ENCODE measurements at regions of chr4 and their contacts with region 1.

Region 1: GRCh38 chr4:182085051-182085480 is 158.1 kb upstream of the TENM3 start:
- DNase-seq: no peak
- ATAC-seq: no peak
- H3K4me3 ChIP-seq: no peak overlapping the region
- H3K27ac ChIP-seq: no peak overlapping the region
- H3K4me1 ChIP-seq: peaks cover 2% of the 10 kb centered on the region; the same call in 1 of the 2 replicates
- H3K27me3 ChIP-seq: no peaks in the 10 kb centered on the region
- CTCF ChIP-seq: no peak
- POLR2A ChIP-seq: no peak
- RAD21 ChIP-seq: no peak

Region 2: DNA sequence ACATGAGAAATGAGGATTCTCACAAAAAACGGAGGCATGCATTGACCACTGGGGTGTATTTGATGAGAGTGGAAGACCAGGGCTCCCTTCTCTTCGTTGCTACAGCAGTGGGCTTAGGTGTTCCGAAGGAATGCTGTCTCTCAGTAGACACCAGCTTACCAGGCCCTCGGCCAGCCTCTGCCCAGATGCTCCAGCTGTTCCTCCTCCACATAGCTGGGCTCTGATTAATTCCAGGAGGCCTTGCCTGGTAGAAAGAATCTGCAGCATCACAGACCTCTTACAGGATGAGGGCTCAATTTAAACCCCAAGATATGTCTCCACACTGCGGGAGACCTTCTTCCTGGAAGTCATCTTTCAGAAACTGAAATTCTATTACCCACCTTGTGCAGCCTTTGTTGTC is 188.5 kb before region 1 on chr4:
- CTCF ChIA-PET with region 1: interaction called, 13 read pairs
- POLR2A ChIA-PET with region 1: no interaction called
- dilution Hi-C with region 1: no loop called
- in situ Hi-C with region 1: no loop called
- intact Hi-C with region 1: no loop called
- DNase-seq: no peak
- ATAC-seq: no peak
- H3K4me3 ChIP-seq: no peak overlapping the region
- H3K27ac ChIP-seq: no peak overlapping the region
- H3K4me1 ChIP-seq: no peaks in the 10 kb centered on the region
- H3K27me3 ChIP-seq: no peaks in the 10 kb centered on the region
- CTCF ChIP-seq: no peak
- POLR2A ChIP-seq: no peak
- RAD21 ChIP-seq: no peak

Measured in IMR-90 (cell line).